A549 (cell line): ENCODE measurements at regions of chrX and their contacts with region 1.

Region 1: GRCh38 chrX:47515941-47516649 is 33.1 kb upstream of the ZNF41 start:
- DNase-seq: peak in 1 of 2 experiments; percentile 34
- ATAC-seq: peak in 1 of 2 experiments; percentile 38; a peak in 2 of 6 replicates
- H3K4me3 ChIP-seq: no peak overlapping the region
- H3K27ac ChIP-seq: no peak overlapping the region
- H3K4me1 ChIP-seq: peaks cover 8% of the 10 kb centered on the region; the same call in 2 of the 3 replicates
- CTCF ChIP-seq: no peak
- EP300 ChIP-seq: no peak
- POLR2A ChIP-seq: no peak
- RAD21 ChIP-seq: no peak

Region 2: GRCh38 chrX:47193475-47194193 is 322.5 kb before region 1 on chrX and contains the start of gene UBA1:
- CTCF ChIA-PET with region 1: no interaction called
- POLR2A ChIA-PET with region 1: interaction called, 11 read pairs
- DNase-seq: peak; percentile 88 to 96
- ATAC-seq: peak; percentile 70 to 84
- H3K4me3 ChIP-seq: peak within 1 kb of the TSS; percentile 93
- H3K27ac ChIP-seq: peak within 1 kb of the TSS; percentile 99
- H3K4me1 ChIP-seq: peaks cover 42% of the 10 kb centered on the region
- CTCF ChIP-seq: peak; percentile 78
- EP300 ChIP-seq: no peak
- POLR2A ChIP-seq: peak; percentile 91
- RAD21 ChIP-seq: peak; percentile 85 to 89
- polyA plus RNA-seq, gene UBA1: 160 and 192 TPM in 2 replicates

Region 3: GRCh38 chrX:47482512-47483309 is 33.4 kb before region 1 on chrX and contains the start of gene ZNF41:
- CTCF ChIA-PET with region 1: no interaction called
- POLR2A ChIA-PET with region 1: no interaction called
- DNase-seq: peak; percentile 86 to 92
- ATAC-seq: peak; percentile 94 to 96
- H3K4me3 ChIP-seq: peak within 1 kb of the TSS; percentile 84
- H3K27ac ChIP-seq: peak within 1 kb of the TSS; percentile 99 to 100
- H3K4me1 ChIP-seq: peaks cover 13% of the 10 kb centered on the region; the same call in 2 of the 3 replicates
- CTCF ChIP-seq: no peak
- EP300 ChIP-seq: no peak
- POLR2A ChIP-seq: peak; percentile 66
- RAD21 ChIP-seq: no peak
- polyA plus RNA-seq, gene ZNF41: 6.1 and 6.5 TPM in 2 replicates

Region 4: DNA sequence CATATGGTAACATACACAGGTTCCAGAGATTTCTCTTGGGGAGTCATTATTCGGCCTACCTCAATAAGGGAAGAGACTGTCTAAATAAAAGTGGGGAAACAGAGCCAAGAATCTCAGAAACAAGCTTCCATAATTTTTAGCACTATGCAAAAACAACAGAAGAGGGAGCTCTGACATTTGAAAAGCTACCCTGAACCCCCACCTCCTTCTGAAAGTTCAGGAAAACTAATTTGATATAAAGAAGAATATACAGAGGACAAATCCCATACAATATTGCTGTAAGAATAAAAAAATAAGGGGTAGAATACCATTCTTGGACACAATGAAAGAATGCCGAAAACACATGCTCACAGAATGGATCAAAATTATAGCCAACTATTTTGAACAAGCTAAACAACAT is 18.8 kb before region 1 on chrX:
- CTCF ChIA-PET with region 1: interaction called, 10 read pairs
- POLR2A ChIA-PET with region 1: no interaction called
- DNase-seq: peak in 1 of 2 experiments; percentile 5
- ATAC-seq: no peak
- H3K4me3 ChIP-seq: no peak overlapping the region
- H3K27ac ChIP-seq: no peak overlapping the region
- H3K4me1 ChIP-seq: no peaks in the 10 kb centered on the region
- CTCF ChIP-seq: peak; percentile 40
- EP300 ChIP-seq: no peak
- POLR2A ChIP-seq: no peak
- RAD21 ChIP-seq: peak; percentile 56 to 65; a peak in 4 of 5 replicates